Activated B cell treated with CpG ODN at 0.5 μM for 24 hours (primary cell): ENCODE measurements at regions of chr10 and their contacts with region 1.

Region 1: DNA sequence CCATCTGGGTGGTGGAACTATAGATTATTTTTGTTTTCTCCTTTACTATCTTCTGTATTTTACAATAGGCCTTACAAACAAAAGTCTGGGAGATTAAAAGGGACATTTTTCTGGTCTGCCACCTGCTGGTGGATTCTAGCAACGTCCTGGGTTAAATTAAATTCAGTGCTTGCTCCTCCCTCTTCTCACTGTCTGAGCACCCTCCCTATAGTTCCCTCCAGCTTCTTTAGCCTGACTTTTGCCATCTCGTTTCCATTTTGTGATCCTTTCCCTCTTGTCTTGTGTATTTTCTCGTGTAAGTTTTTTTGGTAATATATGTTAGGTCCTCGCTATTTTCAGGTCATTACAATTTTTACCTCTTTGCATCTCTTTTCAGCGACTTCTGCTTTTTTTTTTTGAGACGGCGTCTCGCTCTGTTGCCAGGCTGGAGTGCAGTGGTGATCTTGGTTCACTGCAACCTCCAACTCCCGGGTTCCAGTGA is 16.1 kb downstream of the ANKRD16 start:
- DNase-seq: peak; percentile 46
- ATAC-seq: peak; percentile 95
- H3K4me3 Mint-ChIP-seq: peak overlapping the region; percentile 82
- H3K27ac Mint-ChIP-seq: peak overlapping the region; percentile 92
- H3K4me1 Mint-ChIP-seq: peaks cover 28% of the 10 kb centered on the region
- H3K27me3 Mint-ChIP-seq: no peaks in the 10 kb centered on the region
- CTCF ChIP-seq: no peak

Region 2: GRCh38 chr10:5629303-5630111 is 244.0 kb before region 1 on chr10:
- CTCF ChIA-PET with region 1: interaction called, 3 read pairs
- POLR2A ChIA-PET with region 1: no interaction called
- intact Hi-C with region 1: loop called (anchors 5 kb)
- DNase-seq: peak; percentile 71
- ATAC-seq: peak; percentile 98
- H3K4me3 Mint-ChIP-seq: no peak overlapping the region
- H3K27ac Mint-ChIP-seq: no peak overlapping the region
- H3K4me1 Mint-ChIP-seq: peaks cover 10% of the 10 kb centered on the region
- H3K27me3 Mint-ChIP-seq: peaks cover 5% of the 10 kb centered on the region
- CTCF ChIP-seq: peak; percentile 78

Region 3: DNA sequence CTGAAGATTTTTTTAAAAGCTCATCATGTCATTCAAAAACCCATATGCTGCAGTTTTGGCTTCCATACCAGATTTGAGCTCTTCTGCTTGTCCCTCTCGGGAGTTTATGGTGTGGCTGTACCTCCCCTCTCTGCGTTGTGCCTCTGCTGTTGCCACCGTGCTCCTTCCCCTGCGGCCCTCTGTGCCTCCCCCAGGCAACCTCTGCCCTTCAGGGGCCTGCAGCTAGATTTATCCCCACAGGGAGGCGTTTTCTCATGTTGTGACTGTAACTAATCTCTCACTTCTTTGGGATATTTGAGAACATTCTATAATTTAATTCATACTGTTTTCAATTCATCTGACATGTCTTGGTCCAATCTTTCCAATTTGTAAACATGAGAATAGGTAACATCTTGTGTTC is 136.2 kb before region 1 on chr10:
- CTCF ChIA-PET with region 1: no interaction called
- POLR2A ChIA-PET with region 1: no interaction called
- intact Hi-C with region 1: no loop called
- DNase-seq: no peak
- ATAC-seq: no peak
- H3K4me3 Mint-ChIP-seq: no peak overlapping the region
- H3K27ac Mint-ChIP-seq: no peak overlapping the region
- H3K4me1 Mint-ChIP-seq: peaks cover 6% of the 10 kb centered on the region
- H3K27me3 Mint-ChIP-seq: no peaks in the 10 kb centered on the region
- CTCF ChIP-seq: no peak

Region 4: DNA sequence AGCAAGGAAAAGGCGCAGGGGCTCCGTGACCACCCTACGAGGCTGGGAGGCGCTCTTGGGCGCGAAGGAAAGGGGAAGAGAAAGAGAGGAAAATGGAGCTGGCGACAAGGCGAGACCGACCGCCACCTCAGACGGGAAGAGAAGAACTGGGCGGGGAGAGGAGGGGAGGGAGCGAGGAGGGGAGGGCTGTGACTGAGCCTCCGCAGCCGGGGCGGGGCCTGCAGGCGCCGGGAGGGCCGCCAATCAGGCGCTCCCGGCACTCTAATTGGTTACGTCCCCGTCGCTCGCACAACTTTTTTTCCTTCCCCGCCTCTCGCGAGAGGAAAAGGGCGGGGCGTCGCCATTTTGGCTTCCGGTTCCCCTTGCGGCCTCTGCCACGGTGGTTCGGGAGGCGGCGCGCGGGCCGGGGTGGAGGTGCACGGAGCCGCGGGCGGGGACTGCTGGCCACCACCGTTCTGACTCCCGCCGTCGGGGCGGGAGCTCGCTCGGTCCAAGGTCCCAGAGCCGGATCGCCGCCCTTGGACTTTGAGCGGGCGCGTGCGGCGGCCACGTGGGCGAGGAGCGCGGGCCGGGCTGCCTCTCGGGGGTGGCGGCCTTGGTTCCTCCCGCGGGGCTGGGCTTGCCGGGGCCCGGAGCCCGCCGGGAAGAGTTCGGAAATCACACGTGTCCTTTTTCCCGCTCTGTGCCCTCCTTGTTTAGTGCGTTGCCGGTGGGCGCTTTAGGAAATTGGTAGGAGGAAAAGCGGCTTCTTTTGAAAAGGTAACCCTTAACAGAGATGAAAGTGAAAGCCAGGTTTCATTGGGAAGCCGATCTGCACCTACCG is 60.1 kb before region 1 on chr10 and contains the start of gene GDI2:
- CTCF ChIA-PET with region 1: interaction called, 8 read pairs
- POLR2A ChIA-PET with region 1: interaction called, 42 read pairs
- intact Hi-C with region 1: loop called (anchors 1 kb)
- DNase-seq: peak; percentile 96
- ATAC-seq: peak; percentile 82
- H3K4me3 Mint-ChIP-seq: peak within 1 kb of the TSS; percentile 91
- H3K27ac Mint-ChIP-seq: peak within 1 kb of the TSS; percentile 94
- H3K4me1 Mint-ChIP-seq: peaks cover 79% of the 10 kb centered on the region
- H3K27me3 Mint-ChIP-seq: no peaks in the 10 kb centered on the region
- CTCF ChIP-seq: no peak
- total RNA-seq, gene GDI2: 289 and 301 TPM in 2 replicates

Region 5: GRCh38 chr10:5832936-5833335 is 40.6 kb before region 1 on chr10:
- CTCF ChIA-PET with region 1: interaction called, 3 read pairs
- POLR2A ChIA-PET with region 1: interaction called, 10 read pairs
- intact Hi-C with region 1: no loop called
- DNase-seq: no peak
- ATAC-seq: no peak
- H3K4me3 Mint-ChIP-seq: no peak overlapping the region
- H3K27ac Mint-ChIP-seq: no peak overlapping the region
- H3K4me1 Mint-ChIP-seq: peaks cover 21% of the 10 kb centered on the region
- H3K27me3 Mint-ChIP-seq: no peaks in the 10 kb centered on the region
- CTCF ChIP-seq: no peak

Region 6: GRCh38 chr10:5854106-5854570 is 19.4 kb before region 1 on chr10:
- CTCF ChIA-PET with region 1: interaction called, 3 read pairs
- POLR2A ChIA-PET with region 1: interaction called, 11 read pairs
- intact Hi-C with region 1: loop called (anchors 1 kb)
- DNase-seq: no peak
- ATAC-seq: no peak
- H3K4me3 Mint-ChIP-seq: no peak overlapping the region
- H3K27ac Mint-ChIP-seq: peak overlapping the region; percentile 15
- H3K4me1 Mint-ChIP-seq: peaks cover 47% of the 10 kb centered on the region
- H3K27me3 Mint-ChIP-seq: no peaks in the 10 kb centered on the region
- CTCF ChIP-seq: no peak

Region 7: DNA sequence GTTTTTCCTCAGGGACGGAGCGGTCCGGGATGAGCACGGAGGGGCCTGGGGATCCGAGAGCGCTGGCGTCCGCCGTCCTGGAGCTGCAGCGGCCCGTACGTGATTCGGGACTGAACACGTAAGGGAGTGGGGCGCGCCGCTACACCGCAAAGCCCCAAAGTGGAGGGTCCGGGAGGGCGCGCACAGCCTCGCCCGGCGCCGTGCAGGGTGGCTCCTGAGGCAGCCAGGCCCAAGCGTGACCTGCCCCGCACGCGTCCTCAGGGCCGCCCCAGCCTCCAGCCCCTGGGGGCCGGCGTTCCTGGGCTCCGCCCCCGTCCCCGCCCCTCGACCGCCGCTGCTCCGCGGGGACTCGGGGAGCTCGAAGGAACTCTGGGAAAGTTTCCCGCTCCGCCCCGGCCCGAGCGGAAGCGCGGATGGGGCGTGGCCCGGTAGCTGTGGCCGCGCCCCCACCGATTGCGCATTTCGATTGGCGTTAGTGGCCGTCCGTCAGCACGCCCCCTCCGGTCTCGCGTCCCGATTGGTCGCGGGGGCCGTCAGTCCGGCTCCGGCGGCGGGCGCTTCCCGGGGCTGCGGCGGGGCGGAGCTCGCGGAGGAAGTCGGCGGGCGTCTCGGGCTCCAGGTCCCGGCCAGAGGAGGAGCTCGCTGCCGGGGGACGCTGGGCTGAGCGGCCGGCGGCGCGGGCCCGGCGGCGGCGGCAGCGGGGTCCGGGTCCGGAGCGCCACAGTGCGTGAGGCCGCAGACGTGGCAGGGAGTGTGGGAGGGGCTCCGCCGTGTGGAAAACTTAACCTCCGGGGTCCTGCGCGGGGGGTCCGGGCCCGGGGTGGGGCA is 16.3 kb after region 1 on chr10 and contains the starts of genes ANKRD16 and FBH1:
- CTCF ChIA-PET with region 1: interaction called, 4 read pairs
- POLR2A ChIA-PET with region 1: interaction called, 21 read pairs
- intact Hi-C with region 1: no loop called
- DNase-seq: peak; percentile 100
- ATAC-seq: peak; percentile 85
- H3K4me3 Mint-ChIP-seq: peak within 1 kb of the TSS; percentile 87
- H3K27ac Mint-ChIP-seq: peak within 1 kb of the TSS; percentile 78
- H3K4me1 Mint-ChIP-seq: peaks cover 59% of the 10 kb centered on the region
- H3K27me3 Mint-ChIP-seq: no peaks in the 10 kb centered on the region
- CTCF ChIP-seq: no peak
- total RNA-seq, gene ANKRD16: 9.2 and 11.1 TPM in 2 replicates
- total RNA-seq, gene FBH1: 65.5 and 68.7 TPM in 2 replicates